Activated CD4-positive, alpha-beta memory T cell treated with anti-CD3 and anti-CD28 coated beads for 36 hours (primary cell): ENCODE measurements at regions of chr1 and their contacts with region 1.

Region 1: DNA sequence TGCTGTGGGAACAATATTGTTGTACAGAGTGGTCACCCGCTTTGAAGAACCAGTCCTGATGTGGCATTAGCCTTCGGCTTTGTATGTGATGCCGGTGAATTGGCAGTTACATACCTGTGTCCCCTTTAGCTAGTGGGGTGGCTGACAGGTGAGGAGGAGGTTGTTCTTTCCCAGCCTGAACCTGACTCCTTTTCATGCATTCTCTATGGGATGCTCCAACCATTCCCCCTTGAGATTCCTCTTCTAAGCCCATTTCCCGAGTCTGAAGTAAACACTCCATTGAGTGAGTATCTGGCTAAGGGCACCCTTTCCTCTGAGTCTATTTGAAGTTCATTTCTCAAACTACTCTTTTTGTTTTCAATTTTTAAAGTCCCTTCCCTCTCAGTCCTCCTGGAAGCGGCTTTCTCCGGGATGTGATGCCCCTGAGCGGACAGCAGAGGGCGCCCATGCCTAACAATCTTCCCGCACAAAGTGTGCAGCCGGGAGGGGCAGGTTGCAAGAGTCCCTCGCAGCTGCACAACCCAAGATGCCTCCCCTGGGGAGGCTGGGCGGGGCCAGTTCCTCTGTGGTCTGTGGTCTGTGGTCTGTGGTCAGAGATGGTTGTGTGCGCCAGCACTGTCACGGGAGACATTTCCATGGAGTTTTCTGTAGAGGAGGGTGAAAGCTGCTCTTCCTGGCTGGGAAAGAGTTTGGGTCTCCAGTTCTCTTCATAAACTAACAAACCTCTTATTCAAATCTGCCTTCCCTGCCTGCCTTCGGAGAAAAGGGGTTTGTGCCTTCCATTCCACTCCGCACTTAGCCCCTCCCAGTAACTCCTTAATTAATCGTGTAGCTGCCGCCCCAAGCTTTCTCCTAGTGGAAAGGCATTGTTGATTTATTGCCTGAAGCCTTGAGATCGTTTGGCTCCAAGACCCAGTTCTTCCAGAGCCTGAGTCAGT is 36.4 kb upstream of the LMX1A start:
- DNase-seq: peak; percentile 93
- H3K4me3 Mint-ChIP-seq: peak overlapping the region; percentile 66
- H3K27ac Mint-ChIP-seq: peak overlapping the region; percentile 81
- H3K4me1 Mint-ChIP-seq: peaks cover 20% of the 10 kb centered on the region
- H3K27me3 Mint-ChIP-seq: peaks cover 57% of the 10 kb centered on the region

Region 2: DNA sequence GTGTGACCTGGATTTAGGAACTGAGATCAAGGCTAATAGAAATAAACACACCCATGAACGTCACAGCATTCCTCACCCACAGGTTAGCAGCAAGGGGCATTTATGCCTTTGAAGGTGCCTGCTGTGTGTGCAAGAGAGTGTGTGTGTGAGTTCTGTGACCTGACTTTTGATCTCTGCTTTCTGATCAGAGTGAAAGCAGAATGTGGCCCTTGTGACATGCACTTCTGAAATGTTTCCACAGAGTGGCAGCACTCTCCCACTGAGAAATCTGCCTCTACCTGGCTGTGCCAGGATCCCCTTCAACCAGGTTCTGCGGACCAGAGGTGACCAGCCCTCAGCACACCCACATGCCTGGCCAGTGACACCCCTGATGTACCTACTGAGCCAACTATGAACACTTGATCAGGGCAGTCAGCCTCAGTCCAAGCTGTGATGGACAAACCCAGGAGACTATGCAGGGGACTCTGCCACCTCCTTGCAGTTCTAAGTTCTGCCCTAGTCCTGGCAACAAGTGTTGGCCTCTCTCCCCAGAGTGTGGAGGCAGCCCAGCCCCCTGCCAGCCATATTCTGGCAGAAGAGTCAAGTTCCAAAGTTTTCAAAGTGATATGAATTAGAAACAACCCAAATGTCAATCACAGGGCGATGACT is 11.1 kb after region 1 on chr1:
- CTCF ChIA-PET with region 1: interaction called, 19 read pairs
- POLR2A ChIA-PET with region 1: no interaction called
- intact Hi-C with region 1: no loop called
- DNase-seq: peak; percentile 49
- H3K4me3 Mint-ChIP-seq: no peak overlapping the region
- H3K27ac Mint-ChIP-seq: no peak overlapping the region
- H3K4me1 Mint-ChIP-seq: no peaks in the 10 kb centered on the region
- H3K27me3 Mint-ChIP-seq: peaks cover 18% of the 10 kb centered on the region

Region 3: GRCh38 chr1:165630629-165631341 is 237.9 kb after region 1 on chr1 and contains the start of gene MGST3:
- CTCF ChIA-PET with region 1: interaction called, 6 read pairs
- POLR2A ChIA-PET with region 1: no interaction called
- intact Hi-C with region 1: loop called (anchors 1 kb)
- DNase-seq: peak; percentile 97
- H3K4me3 Mint-ChIP-seq: no peak within 1 kb of the TSS
- H3K27ac Mint-ChIP-seq: no peak within 1 kb of the TSS
- H3K4me1 Mint-ChIP-seq: peaks cover 15% of the 10 kb centered on the region
- H3K27me3 Mint-ChIP-seq: no peaks in the 10 kb centered on the region
- total RNA-seq, gene MGST3: 53.3 to 56.6 TPM

Region 4: DNA sequence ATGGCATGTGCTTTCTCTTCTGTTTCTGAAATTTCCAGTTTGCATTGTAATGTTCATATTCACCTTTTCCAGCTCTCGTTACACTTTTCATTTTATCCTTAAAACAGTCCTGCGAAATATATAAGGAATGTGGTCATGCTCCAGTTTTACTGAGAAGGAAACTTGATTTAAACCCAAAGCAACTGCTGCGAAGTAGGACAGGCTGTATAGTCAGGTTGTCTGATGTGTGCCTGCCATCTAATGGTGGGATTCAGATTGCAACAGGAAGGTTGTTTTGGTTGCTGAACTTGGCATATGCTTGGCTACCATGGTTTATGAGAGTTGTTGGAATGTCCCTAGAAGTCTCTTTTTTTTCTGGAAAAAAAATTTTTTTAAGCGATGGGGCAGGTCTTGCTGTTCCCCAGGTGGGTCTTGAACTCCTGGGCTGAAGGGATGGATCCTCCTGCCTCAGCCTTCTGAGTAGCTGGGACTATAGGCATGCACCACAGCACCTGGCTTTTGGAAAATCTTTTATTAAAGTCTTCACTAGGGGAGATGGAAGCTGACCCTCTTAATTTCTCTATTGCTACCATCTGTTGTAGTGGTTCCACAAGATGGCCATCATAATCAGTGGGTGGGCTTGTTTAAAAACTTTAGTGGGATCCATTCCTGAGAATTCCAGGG is 521.4 kb after region 1 on chr1:
- CTCF ChIA-PET with region 1: interaction called, 3 read pairs
- POLR2A ChIA-PET with region 1: no interaction called
- intact Hi-C with region 1: loop called (anchors 5 kb)
- DNase-seq: peak; percentile 71
- H3K4me3 Mint-ChIP-seq: no peak overlapping the region
- H3K27ac Mint-ChIP-seq: no peak overlapping the region
- H3K4me1 Mint-ChIP-seq: peaks cover 3% of the 10 kb centered on the region
- H3K27me3 Mint-ChIP-seq: no peaks in the 10 kb centered on the region